Left lung (tissue), 14 donors: ENCODE measurements at regions of chr13 and their contacts with region 1.

Region 1: GRCh38 chr13:51286135-51287002 is 53.1 kb upstream of the SERPINE3 start:
- DNase-seq: peak; percentile 67 to 89 (median 78)
- ATAC-seq: peak; percentile 97
- H3K4me3 ChIP-seq: no peak overlapping the region
- H3K27ac ChIP-seq: no peak overlapping the region
- H3K4me1 ChIP-seq: no peaks in the 10 kb centered on the region
- H3K27me3 ChIP-seq: no peaks in the 10 kb centered on the region
- CTCF ChIP-seq: peak; percentile 90 to 94

Region 2: GRCh38 chr13:51134763-51135365 is 151.5 kb before region 1 on chr13:
- intact Hi-C with region 1: loop called in 1 of 2 experiments (anchors 10 kb)
- DNase-seq: no peak
- ATAC-seq: no peak
- H3K4me3 ChIP-seq: no peak overlapping the region
- H3K27ac ChIP-seq: no peak overlapping the region
- H3K4me1 ChIP-seq: no peaks in the 10 kb centered on the region
- H3K27me3 ChIP-seq: no peaks in the 10 kb centered on the region
- CTCF ChIP-seq: no peak

Region 3: GRCh38 chr13:51148952-51149573 is 137.3 kb before region 1 on chr13:
- intact Hi-C with region 1: loop called in 1 of 2 experiments (anchors 5 kb)
- DNase-seq: peak in 2 of 4 donors; percentile 62 to 77
- ATAC-seq: peak; percentile 80
- H3K4me3 ChIP-seq: no peak overlapping the region
- H3K27ac ChIP-seq: peak overlapping the region in 1 of 2 donors; percentile 11
- H3K4me1 ChIP-seq: peaks cover 0 to 5% of the 10 kb centered on the region in 2 donors
- H3K27me3 ChIP-seq: no peaks in the 10 kb centered on the region
- CTCF ChIP-seq: peak; percentile 31 to 38

Region 4: DNA sequence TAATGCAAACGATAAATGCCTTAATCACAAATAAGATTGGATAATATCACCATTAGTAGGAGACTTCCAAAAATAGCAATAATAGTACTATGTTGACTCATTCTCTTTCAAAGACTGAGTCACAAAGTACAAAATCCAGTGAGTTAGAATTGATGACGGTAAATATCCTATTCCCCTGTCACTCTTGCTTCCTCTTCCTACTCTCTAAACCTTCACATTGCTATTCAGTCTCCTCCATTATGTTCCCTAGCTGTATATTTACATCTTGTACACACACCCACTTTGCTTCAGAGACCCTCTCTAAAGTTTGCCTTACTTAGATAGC is 192.8 kb after region 1 on chr13:
- intact Hi-C with region 1: no loop called
- DNase-seq: no peak
- ATAC-seq: no peak
- H3K4me3 ChIP-seq: no peak overlapping the region
- H3K27ac ChIP-seq: no peak overlapping the region
- H3K4me1 ChIP-seq: no peaks in the 10 kb centered on the region
- H3K27me3 ChIP-seq: no peaks in the 10 kb centered on the region
- CTCF ChIP-seq: no peak